Activated CD4-positive, alpha-beta T cell treated with anti-CD3 and anti-CD28 coated beads for 36 hours (primary cell): ENCODE measurements at regions of chr1 and their contacts with region 1.

Region 1: DNA sequence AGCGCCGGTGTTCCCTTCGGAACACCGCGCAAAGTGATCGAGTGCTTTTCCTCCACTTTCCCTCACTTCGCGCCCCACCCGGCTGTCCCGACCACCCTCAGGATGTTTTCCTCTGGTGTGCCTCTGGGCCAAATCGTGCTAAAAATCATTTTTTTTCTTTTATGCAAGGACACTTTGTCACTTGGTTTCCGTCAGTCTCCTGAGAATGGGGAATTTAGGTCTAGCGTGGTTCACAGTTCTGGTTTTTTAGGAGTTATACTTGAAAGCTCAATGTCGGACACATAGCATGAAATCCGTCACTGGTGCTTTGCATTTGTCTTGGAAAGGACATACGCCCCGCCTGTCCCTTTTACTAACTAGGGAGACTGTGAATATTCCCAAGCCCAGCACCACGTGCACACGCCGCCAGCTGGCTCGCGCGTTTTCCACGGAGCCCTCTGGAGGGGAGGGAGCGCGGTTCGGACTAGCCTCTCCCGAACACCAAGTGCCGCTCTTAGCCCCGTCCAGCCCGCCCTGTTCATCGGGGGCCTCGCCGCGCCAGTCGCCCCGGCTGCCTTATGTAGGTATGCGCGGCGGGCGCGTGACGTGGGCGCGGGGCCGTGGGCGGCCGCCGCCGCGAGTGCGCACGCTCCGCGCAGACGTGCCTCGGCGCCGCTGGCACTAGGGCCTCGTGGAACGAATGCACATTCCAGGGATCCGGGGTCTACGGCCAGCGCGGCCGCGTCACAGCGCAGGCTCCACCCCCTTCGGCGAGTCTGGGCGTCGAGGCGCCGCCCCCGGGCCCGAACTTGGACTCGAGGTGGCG is 572 bp upstream of the IRF2BP2 start:
- DNase-seq: peak; percentile 95
- ATAC-seq: peak; percentile 52
- H3K4me3 Mint-ChIP-seq: peak overlapping the region; percentile 79
- H3K27ac Mint-ChIP-seq: peak overlapping the region; percentile 90
- H3K4me1 Mint-ChIP-seq: peaks cover 29% of the 10 kb centered on the region
- H3K27me3 Mint-ChIP-seq: no peaks in the 10 kb centered on the region

Region 2: GRCh38 chr1:234083460-234083859 is 527.1 kb before region 1 on chr1:
- CTCF ChIA-PET with region 1: no interaction called
- POLR2A ChIA-PET with region 1: no interaction called
- intact Hi-C with region 1: no loop called
- DNase-seq: no peak
- ATAC-seq: no peak
- H3K4me3 Mint-ChIP-seq: no peak overlapping the region
- H3K27ac Mint-ChIP-seq: no peak overlapping the region
- H3K4me1 Mint-ChIP-seq: no peaks in the 10 kb centered on the region
- H3K27me3 Mint-ChIP-seq: peaks cover 24% of the 10 kb centered on the region

Region 3: DNA sequence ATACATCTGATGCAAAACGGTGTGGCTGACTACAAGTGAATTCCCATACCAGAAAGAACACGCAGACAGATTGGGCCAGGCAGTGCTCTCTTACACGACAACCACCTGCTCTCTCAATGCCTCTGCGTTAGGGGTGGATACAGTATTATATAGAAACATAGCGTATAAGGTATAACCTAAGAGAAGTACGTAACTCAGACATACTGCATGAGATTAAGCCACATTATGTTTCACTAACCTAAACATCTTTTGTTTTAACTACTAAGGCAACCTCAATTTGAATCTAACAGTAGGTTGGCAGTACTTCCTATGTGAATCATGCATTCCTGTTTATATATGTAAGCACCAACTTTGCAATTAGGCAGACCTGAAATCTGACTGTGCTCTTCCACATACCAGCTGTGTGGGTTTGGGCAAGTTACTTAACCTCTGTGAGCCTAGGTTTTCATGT is 295.4 kb before region 1 on chr1:
- CTCF ChIA-PET with region 1: no interaction called
- POLR2A ChIA-PET with region 1: no interaction called
- intact Hi-C with region 1: loop called in 1 of 2 experiments (anchors 5 kb)
- DNase-seq: peak; percentile 56
- ATAC-seq: peak; percentile 84
- H3K4me3 Mint-ChIP-seq: peak overlapping the region; percentile 22
- H3K27ac Mint-ChIP-seq: peak overlapping the region; percentile 89
- H3K4me1 Mint-ChIP-seq: peaks cover 63% of the 10 kb centered on the region
- H3K27me3 Mint-ChIP-seq: peaks cover 1% of the 10 kb centered on the region

Region 4: GRCh38 chr1:234533975-234534876 is 76.3 kb before region 1 on chr1:
- CTCF ChIA-PET with region 1: no interaction called
- POLR2A ChIA-PET with region 1: no interaction called
- intact Hi-C with region 1: no loop called
- DNase-seq: no peak
- ATAC-seq: no peak
- H3K4me3 Mint-ChIP-seq: no peak overlapping the region
- H3K27ac Mint-ChIP-seq: no peak overlapping the region
- H3K4me1 Mint-ChIP-seq: peaks cover 5% of the 10 kb centered on the region
- H3K27me3 Mint-ChIP-seq: no peaks in the 10 kb centered on the region

Region 5: GRCh38 chr1:234599617-234600417 is 10.7 kb before region 1 on chr1:
- CTCF ChIA-PET with region 1: interaction called, 12 read pairs
- POLR2A ChIA-PET with region 1: interaction called, 12 read pairs
- intact Hi-C with region 1: loop called (anchors 1 kb)
- DNase-seq: peak; percentile 86
- ATAC-seq: peak; percentile 73
- H3K4me3 Mint-ChIP-seq: peak overlapping the region; percentile 97
- H3K27ac Mint-ChIP-seq: peak overlapping the region; percentile 91
- H3K4me1 Mint-ChIP-seq: peaks cover 49% of the 10 kb centered on the region
- H3K27me3 Mint-ChIP-seq: no peaks in the 10 kb centered on the region

Region 6: DNA sequence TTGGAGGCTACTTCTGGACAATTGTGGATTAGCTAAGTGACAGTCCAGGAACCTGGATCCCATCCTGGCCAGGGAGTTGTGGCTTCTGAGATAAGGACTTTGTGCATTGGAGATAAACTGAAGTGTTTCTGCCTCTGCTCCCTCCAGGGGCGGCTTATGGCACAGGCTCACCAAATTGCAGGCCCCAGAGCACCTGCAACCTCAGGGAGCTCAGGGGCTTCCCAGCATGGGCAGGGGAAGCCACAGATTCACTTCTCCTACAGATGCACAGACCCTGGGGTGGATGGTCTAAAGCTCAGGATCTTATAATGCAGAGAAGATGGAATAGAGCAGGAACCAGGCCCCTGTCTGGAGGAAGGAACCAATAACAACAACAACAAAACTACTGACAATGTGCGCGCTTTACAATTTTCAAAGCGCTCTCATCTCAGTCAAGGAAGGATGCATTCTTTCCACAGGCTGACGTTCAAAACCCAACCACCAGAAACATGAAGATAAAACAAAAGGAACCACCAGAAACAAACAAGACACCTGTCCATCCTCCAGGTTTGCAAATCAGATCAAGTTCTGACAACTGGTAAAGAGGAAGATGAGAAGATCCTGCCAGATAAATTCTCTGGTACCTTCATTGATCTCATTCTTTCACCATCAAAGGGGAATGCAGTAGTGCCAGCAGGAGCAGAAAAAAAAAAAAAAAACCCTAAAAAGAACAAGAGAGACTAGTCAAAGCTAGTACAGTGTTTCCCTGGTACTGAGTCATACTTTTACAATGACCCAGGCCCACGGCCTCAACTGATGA is 120.4 kb after region 1 on chr1:
- CTCF ChIA-PET with region 1: interaction called, 5 read pairs
- POLR2A ChIA-PET with region 1: interaction called, 8 read pairs
- intact Hi-C with region 1: loop called (anchors 1 kb)
- DNase-seq: peak; percentile 77
- ATAC-seq: peak; percentile 87
- H3K4me3 Mint-ChIP-seq: peak overlapping the region; percentile 32
- H3K27ac Mint-ChIP-seq: peak overlapping the region; percentile 92
- H3K4me1 Mint-ChIP-seq: peaks cover 71% of the 10 kb centered on the region
- H3K27me3 Mint-ChIP-seq: no peaks in the 10 kb centered on the region

Region 7: DNA sequence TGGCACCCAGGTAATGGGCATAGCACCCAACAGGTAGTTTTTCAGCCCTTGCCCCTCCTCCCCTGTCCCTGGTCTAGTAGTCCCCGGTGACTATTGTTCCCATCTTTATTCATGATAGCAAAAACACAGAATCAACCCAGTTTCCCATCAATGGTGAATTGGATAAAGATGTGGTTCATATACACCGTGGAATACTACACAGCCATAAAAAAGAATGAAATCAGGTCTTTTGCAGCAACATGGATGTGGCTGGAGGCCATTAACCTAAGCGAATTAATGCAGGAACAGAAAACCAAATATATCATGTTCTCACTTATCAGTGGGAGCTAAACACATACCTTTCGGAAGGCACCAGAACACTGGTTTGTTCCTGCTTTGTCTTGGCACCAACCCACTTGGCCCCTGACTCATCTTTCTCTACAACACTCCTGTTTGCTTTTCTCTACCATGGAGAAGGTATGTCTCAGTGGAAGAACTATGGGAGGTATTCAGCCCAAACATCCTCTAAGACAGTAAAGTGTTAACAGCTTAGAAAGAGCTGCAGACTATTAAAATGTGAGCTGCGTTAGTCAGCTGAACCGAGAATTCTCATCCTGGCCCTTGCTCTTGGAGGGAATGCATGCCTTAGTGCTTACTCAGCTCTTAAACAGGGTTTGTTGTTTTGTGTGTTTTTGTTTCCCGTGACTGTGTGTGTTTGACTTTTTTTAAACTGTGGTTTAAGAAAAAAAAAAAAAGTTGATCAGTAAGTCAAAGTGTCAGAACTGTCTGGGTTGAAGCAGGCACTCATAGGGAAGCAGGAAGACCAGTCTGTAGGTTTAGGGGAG is 315.1 kb after region 1 on chr1:
- CTCF ChIA-PET with region 1: interaction called, 3 read pairs
- POLR2A ChIA-PET with region 1: interaction called, 4 read pairs
- intact Hi-C with region 1: loop called (anchors 2 kb)
- DNase-seq: no peak
- ATAC-seq: peak; percentile 27
- H3K4me3 Mint-ChIP-seq: peak overlapping the region; percentile 59
- H3K27ac Mint-ChIP-seq: peak overlapping the region; percentile 86
- H3K4me1 Mint-ChIP-seq: peaks cover 53% of the 10 kb centered on the region
- H3K27me3 Mint-ChIP-seq: no peaks in the 10 kb centered on the region

Region 8: DNA sequence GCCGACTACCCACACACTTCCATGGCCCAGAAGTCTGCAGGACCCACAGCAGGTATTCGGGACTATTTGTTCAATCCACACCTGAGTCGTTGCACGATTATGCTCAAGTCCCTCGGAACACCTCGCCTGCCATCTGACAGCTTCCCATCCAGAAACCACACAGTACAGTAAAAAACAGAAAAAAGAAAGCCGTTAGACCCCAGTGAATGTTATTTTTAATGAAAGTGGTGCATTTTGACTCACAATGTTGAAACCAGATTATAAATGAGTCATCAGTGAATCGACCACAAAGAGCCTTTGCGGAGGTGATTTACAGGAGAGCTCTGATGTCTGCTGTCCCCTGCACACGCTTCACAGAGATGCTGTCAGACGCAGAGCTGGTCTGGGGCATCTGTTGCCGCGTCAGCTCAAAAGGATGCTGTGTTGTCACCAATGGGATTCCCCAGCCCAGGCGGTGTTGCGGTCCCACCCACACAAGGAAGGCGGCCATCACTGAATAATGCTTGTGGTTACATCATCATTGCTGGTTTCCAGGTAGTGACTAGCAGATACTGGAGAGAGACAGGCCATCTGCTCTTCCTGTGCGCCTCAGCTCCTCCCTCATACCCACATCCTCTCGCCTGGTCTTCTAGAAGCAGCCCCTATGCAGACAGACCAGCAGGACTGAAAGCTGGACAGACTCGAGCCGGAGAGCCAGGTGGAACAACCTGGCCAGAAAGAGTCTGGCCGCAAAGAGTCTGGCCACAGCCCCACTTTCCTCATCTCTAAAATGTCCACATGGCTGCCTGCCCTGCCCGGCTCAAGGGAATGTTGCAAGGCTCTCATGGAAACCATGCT is 401.3 kb after region 1 on chr1:
- CTCF ChIA-PET with region 1: interaction called, 8 read pairs
- POLR2A ChIA-PET with region 1: interaction called, 19 read pairs
- intact Hi-C with region 1: loop called (anchors 1 kb)
- DNase-seq: peak; percentile 98
- ATAC-seq: peak; percentile 80
- H3K4me3 Mint-ChIP-seq: peak overlapping the region; percentile 52
- H3K27ac Mint-ChIP-seq: peak overlapping the region; percentile 93
- H3K4me1 Mint-ChIP-seq: peaks cover 91% of the 10 kb centered on the region
- H3K27me3 Mint-ChIP-seq: no peaks in the 10 kb centered on the region

Region 9: DNA sequence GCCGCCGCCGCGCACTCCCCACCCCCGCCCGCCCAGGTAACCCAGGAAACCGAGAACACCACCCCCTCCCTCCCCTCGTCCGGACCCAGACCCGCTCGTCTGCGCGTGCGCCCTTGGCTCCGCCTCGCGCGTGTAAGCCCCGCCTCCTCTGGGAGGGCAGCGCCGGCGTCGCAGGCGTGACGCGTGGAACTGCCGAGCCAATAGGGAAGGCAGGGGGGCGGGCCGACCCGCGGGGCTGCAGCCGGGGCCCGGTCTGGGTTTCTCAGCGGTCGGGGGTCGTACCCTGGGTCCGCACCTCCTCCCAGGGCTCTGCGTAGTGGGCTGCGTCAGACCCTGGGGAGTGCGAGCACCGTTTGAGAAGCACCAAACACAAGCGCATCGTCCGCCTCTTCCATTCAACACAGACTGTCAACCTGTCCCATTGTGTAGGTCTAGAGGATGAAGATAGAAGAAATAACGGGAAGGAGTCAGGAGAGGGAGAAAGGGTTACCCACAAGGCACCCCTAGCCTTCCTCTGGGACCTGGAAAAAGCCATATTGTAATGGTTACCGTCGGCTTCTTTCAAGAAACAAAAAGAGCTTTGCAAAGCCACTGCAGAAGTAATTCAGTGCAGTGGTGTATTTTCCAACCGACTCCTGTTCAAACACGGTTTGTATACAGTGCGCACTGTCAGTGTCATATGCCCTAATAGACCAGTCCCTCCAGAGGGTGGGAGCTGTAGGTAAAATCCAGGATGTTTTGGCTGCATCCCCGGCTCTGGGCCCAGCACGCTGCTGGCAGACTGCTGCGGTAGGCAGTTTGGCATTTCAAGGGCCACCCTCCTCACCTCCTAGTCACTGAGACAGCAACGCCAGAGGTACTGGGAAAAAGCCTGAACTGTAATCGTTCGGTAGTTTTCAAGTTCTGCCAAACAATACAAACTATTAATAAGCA is 1256.6 kb after region 1 on chr1:
- CTCF ChIA-PET with region 1: no interaction called
- POLR2A ChIA-PET with region 1: no interaction called
- intact Hi-C with region 1: loop called in 1 of 2 experiments (anchors 5 kb)
- DNase-seq: peak; percentile 99
- ATAC-seq: peak; percentile 76
- H3K4me3 Mint-ChIP-seq: peak overlapping the region; percentile 96
- H3K27ac Mint-ChIP-seq: peak overlapping the region; percentile 97
- H3K4me1 Mint-ChIP-seq: peaks cover 45% of the 10 kb centered on the region
- H3K27me3 Mint-ChIP-seq: no peaks in the 10 kb centered on the region